ENCODE measurements at regions of chr1 and their contacts with region 1.

Region 1: GRCh38 chr1:46179138-46180081 is 3.1 kb upstream of the P3R3URF start:
- DNase-seq: peak; percentile 82
- CTCF ChIP-seq: peak; percentile 92

Region 2: DNA sequence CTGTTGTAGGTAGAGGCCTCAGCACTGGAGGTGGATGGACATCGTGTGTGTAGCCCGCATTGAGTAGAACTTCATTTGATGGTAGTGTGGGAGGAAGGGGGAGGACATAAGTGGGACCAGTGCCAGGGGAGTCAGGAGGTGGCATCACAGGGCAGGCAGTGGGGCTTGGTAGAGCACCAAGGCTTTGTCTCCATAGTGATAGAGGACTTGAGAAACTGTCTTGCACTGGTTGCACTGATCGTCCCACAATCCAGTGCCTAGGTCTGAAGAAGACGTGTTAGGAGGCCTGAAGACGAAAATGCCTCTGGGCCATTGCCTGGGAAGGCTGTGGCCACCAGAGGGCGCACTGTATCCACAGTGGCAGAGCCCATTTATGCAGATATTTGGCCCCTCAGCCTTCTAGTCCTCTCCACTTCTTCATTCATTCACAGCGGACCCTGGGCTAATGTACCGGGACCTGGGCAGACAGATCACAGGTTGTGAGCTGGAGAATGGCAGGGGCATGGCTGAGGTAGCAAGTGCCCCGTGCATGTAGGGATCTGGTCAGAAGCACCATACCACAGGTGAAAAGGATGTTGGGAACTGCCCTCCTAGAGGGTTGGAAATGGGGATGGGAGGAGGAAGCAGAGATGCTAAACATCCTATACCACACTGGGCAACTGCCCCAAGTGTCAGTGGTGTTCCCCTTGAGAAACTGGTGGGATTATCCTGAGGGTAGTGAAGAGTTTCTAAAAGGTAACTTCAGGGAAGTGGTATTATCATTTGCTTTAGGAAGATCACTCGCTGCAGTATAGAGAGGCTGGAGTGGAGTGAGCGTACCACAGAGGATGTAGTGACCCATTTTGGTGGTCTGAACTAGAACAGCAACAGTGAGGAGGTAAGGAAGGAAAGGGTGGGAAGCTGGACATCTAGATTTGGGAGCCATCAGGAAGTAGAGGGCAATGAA is 142.2 kb before region 1 on chr1:
- in situ Hi-C with region 1: loop called (anchors 5 kb)
- DNase-seq: peak; percentile 87
- CTCF ChIP-seq: peak; percentile 99

Region 3: DNA sequence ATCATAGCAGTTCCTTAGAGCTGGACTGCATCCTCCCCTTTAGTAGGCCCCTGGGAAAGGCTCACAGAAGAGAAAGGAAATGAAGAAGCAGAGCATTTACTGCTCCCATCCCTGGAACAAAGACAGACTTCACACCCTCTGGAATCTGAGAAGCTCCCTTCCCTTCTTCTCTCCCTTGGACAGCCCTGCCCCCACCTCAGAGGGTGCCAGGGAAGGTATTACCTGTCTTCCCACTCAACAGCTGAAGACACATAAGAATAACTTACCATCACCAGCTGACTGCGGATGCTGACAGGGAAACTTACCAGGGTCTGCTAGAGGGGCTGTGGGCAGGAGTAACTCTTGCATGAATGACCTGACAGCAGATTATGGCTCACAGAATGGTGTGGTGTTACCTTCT is 200.6 kb after region 1 on chr1:
- in situ Hi-C with region 1: no loop called
- DNase-seq: no peak
- CTCF ChIP-seq: no peak

Measured in GM13977 (cell line).